Activated CD4-positive, alpha-beta T cell treated with anti-CD3 and anti-CD28 coated beads for 36 hours (primary cell): ENCODE measurements at regions of chrX and their contacts with region 1.

Region 1: GRCh38 chrX:124098089-124098488 is 136.6 kb downstream of the STAG2 start:
- DNase-seq: no peak
- ATAC-seq: no peak
- H3K4me3 Mint-ChIP-seq: no peak overlapping the region
- H3K27ac Mint-ChIP-seq: no peak overlapping the region
- H3K4me1 Mint-ChIP-seq: peaks cover 5% of the 10 kb centered on the region
- H3K27me3 Mint-ChIP-seq: no peaks in the 10 kb centered on the region

Region 2: DNA sequence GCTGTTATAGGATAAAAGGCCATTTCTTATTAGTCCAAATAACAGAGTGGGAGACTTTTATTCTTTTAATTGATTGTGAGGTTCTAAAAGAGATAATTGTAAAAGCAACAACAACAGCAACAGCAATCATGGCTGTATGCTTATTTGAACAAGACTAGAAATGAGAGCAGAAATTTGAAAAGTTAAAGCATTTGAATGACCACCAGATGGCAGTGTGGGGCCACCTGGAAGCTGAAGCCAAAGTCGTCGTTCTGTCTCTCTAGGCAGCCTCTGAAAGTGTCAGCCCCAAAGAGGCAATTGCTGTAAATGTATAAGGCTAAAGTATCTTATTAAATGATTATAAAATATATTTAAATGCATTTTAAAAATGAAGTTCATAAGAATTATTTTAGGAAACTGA is 290.5 kb after region 1 on chrX:
- CTCF ChIA-PET with region 1: no interaction called
- POLR2A ChIA-PET with region 1: no interaction called
- intact Hi-C with region 1: loop called in 1 of 2 experiments (anchors 10 kb)
- DNase-seq: peak; percentile 73
- ATAC-seq: peak; percentile 65
- H3K4me3 Mint-ChIP-seq: no peak overlapping the region
- H3K27ac Mint-ChIP-seq: no peak overlapping the region
- H3K4me1 Mint-ChIP-seq: peaks cover 27% of the 10 kb centered on the region
- H3K27me3 Mint-ChIP-seq: no peaks in the 10 kb centered on the region